ENCODE measurements at regions of chr2 and their contacts with region 1.

Region 1: DNA sequence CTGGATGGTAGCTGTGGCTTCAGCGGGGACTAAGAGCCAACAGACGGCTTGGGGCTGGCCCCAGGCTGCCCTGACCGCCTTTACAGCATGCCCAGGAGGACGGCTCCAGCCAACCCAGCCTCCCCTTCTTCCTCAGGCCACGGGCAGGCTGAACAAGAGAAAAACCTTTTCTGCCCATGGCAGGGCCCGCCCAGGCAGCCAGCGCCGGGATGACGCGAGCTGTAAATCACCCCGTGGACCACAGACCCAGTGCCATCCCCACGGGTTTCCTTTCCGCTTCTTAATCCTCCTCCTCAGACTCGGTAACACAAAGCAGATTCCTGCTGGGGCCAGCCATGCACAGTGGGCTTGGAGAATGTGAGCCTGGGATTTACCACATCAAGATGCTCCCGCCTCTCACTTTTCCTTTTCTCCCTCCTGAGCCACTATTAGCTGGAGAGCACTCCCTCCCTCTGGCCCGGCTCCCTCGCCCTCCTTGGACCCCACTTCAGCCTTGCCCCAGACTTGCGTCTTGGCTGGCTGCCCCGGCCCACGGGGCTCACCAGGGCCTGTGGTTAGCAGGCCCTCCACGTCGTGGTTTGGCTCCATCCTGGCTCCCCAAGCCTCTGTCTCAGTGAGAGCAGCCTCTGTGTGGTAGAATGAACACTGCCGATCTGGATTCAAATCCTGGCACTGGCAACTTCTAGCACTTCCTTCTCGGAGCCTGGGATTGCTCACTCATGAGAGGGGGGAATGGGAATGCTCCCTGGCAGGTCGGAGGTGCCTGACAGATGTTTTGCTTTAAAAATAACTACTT is 31.4 kb downstream of the ATOH8 start:
- DNase-seq: peak; percentile 85
- H3K4me3 ChIP-seq: peak overlapping the region in 1 of 4 donors; percentile 2
- H3K27ac ChIP-seq: peak overlapping the region; percentile 71 to 86 (median 80)
- H3K4me1 ChIP-seq: peaks cover 0 to 44% (median 31%) of the 10 kb centered on the region in 4 donors
- H3K27me3 ChIP-seq: no peaks in the 10 kb centered on the region
- CTCF ChIP-seq: no peak
- EP300 ChIP-seq: no peak
- POLR2A ChIP-seq: no peak

Region 2: GRCh38 chr2:85266146-85267041 is 518.8 kb before region 1 on chr2:
- intact Hi-C with region 1: no loop called
- DNase-seq: peak; percentile 85
- H3K4me3 ChIP-seq: no peak overlapping the region
- H3K27ac ChIP-seq: peak overlapping the region in 2 of 4 donors; percentile 2 to 6
- H3K4me1 ChIP-seq: peaks cover 0 to 24% (median 13%) of the 10 kb centered on the region in 4 donors
- H3K27me3 ChIP-seq: no peaks in the 10 kb centered on the region
- CTCF ChIP-seq: peak; percentile 31 to 83 (median 64)
- EP300 ChIP-seq: no peak
- POLR2A ChIP-seq: no peak

Region 3: GRCh38 chr2:85354286-85355072 is 430.7 kb before region 1 on chr2 and contains the starts of genes ELMOD3 and RETSAT:
- intact Hi-C with region 1: no loop called
- DNase-seq: peak; percentile 99
- H3K4me3 ChIP-seq: peak within 1 kb of the TSS; percentile 56 to 83 (median 64)
- H3K27ac ChIP-seq: peak within 1 kb of the TSS; percentile 80 to 88 (median 84)
- H3K4me1 ChIP-seq: peaks cover 0 to 44% (median 27%) of the 10 kb centered on the region in 4 donors
- H3K27me3 ChIP-seq: no peaks in the 10 kb centered on the region
- CTCF ChIP-seq: no peak
- EP300 ChIP-seq: no peak
- POLR2A ChIP-seq: peak; percentile 77 to 91
- total RNA-seq, gene ELMOD3: 16.7 to 26.3 (median 22.9) TPM
- total RNA-seq, gene RETSAT: 26.5 to 54.6 (median 42.1) TPM

Region 4: DNA sequence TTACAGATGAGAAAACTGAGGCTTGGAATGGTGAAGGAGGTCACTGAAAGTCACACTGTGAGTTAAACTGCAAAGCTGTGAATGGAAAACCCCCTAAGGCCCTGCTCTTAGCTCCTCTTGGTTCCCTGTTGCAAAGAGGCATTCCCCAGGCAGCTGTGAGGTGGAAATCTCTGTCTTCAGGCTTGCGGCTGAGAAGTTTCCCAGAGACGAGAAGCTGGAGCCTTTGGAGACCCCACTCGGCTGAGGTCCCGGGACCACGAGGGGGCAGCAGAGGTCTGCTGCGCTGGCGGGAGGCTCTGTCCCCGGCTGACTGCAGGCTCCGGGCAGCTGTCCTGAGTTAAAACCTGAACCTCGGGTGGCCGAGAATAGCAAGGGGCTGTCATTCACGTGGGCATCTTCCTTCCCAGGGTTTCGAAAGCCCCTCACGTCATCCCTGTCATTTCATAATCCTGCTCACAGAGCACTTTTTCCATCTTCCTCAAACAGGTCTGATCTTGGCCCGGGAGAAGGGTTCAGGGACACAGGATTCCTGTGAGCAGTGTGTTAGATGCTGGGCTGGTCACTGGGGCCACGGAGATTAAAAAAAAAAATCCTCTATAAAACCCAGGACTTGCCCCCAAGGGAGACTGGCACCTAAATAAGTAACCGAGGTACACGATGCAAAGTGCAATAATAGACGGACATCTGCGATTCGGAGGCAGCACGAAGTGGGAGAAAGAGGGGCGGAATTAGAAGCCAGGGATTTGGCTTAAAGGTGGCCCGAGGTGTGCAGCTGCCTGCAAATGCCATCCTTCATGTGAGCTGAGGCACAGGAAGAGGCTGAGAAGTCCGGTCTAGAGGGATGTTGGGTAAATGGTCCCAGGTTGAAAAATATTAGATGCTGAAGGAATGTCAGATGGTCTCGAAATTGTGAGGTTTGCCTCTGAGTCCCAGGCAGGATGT is 56.1 kb before region 1 on chr2:
- intact Hi-C with region 1: no loop called
- DNase-seq: peak; percentile 94
- H3K4me3 ChIP-seq: no peak overlapping the region
- H3K27ac ChIP-seq: peak overlapping the region in 2 of 4 donors; percentile 20 to 39
- H3K4me1 ChIP-seq: peaks cover 0 to 13% (median 10%) of the 10 kb centered on the region in 4 donors
- H3K27me3 ChIP-seq: no peaks in the 10 kb centered on the region
- CTCF ChIP-seq: peak; percentile 81 to 97 (median 91)
- EP300 ChIP-seq: peak in 1 of 4 donors; percentile 44
- POLR2A ChIP-seq: no peak

Region 5: DNA sequence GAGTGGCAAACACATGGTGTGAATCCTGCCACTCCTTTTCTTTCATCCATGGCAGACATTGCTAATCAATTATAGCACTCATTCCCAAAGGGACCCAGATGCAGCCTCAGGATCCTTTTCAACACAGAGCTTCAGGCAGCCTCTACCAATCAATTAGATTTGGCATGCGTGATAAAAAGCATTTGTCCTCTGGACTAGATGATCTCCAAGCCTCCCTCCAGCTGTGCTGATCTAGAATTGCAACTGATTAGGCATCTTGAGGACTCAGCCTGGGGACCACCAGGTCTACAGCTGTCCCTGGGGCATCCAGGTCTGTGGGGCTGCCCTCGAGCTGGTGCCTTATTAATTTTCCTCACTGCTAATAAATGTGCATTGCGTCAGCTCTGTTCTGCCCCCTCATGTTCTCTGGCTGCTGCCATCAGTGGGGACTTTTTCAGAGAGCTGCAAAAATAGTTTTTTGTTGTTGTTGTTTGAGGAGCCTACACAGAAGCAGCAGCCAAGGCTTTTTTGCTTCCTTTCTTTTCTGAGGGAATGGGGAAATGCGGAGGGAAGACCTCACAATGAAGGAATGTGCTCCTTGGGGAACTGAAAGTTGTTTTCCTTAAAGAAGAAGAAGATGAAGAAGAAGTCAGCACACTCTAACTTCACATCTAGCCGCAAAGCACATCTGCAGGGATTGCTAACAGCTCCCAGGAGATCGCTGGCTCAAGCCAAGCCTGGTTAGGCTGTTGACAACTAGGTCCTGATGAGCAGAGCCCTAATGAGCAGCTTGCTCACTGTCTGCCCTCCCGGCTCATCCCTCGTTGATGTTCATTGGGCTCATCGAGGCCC is 40.2 kb before region 1 on chr2:
- intact Hi-C with region 1: loop called (anchors 5 kb)
- DNase-seq: peak; percentile 86
- H3K4me3 ChIP-seq: no peak overlapping the region
- H3K27ac ChIP-seq: peak overlapping the region; percentile 77 to 91 (median 85)
- H3K4me1 ChIP-seq: peaks cover 0 to 80% (median 72%) of the 10 kb centered on the region in 4 donors
- H3K27me3 ChIP-seq: no peaks in the 10 kb centered on the region
- CTCF ChIP-seq: no peak
- EP300 ChIP-seq: peak in 1 of 4 donors; percentile 5
- POLR2A ChIP-seq: no peak

Region 6: GRCh38 chr2:86396291-86396785 is 611.1 kb after region 1 on chr2:
- intact Hi-C with region 1: no loop called
- DNase-seq: no peak
- H3K4me3 ChIP-seq: no peak overlapping the region
- H3K27ac ChIP-seq: no peak overlapping the region
- H3K4me1 ChIP-seq: peaks cover 0 to 11% (median 8%) of the 10 kb centered on the region in 4 donors
- H3K27me3 ChIP-seq: no peaks in the 10 kb centered on the region
- CTCF ChIP-seq: peak in 2 of 4 experiments; percentile 22 to 23
- EP300 ChIP-seq: no peak
- POLR2A ChIP-seq: no peak

Measured in sigmoid colon (tissue), 7 donors.